ENCODE measurements at regions of chr9 and their contacts with region 1.

Region 1: DNA sequence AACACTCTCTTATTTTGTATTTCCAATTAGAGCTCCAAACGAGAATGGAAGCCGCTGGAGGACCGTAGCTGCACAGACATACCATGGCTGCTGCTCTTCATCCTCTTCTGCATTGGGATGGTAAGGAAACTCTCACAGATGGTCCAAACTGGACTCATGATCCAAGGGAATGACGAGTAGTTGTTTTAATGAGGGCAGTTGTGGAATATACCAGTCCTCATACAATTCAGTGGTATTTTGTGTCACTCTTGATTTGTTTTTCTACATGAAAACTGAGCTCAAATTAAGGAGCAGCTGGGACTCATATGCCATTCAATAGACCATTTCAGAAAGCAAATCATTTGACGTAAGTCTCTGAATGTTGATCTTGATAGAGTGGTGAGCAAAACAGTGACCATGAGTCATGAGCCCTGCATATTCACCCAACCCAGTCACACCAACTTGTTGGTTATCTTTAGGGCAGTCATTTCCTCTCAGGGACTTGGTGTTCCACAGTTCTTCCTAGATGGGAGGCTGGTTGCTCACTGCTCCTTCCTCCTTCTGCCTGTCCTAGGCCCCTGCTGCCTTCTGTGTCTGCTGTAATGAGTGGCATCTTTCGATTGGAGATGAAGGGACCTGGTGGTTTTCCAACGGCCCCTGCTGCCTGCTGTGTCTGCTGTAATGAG is 54.9 kb downstream of the SLC44A1 start:
- DNase-seq: peak; percentile 34
- H3K4me3 Mint-ChIP-seq: no peak overlapping the region
- H3K27ac Mint-ChIP-seq: peak overlapping the region; percentile 84
- H3K4me1 Mint-ChIP-seq: peaks cover 45% of the 10 kb centered on the region
- H3K27me3 Mint-ChIP-seq: no peaks in the 10 kb centered on the region
- CTCF ChIP-seq: no peak

Region 2: GRCh38 chr9:105264380-105264779 is 34.9 kb before region 1 on chr9:
- CTCF ChIA-PET with region 1: no interaction called
- intact Hi-C with region 1: loop called (anchors 5 kb)
- DNase-seq: no peak
- H3K4me3 Mint-ChIP-seq: peak overlapping the region; percentile 15
- H3K27ac Mint-ChIP-seq: peak overlapping the region; percentile 59
- H3K4me1 Mint-ChIP-seq: peaks cover 30% of the 10 kb centered on the region
- H3K27me3 Mint-ChIP-seq: no peaks in the 10 kb centered on the region
- CTCF ChIP-seq: no peak

Region 3: DNA sequence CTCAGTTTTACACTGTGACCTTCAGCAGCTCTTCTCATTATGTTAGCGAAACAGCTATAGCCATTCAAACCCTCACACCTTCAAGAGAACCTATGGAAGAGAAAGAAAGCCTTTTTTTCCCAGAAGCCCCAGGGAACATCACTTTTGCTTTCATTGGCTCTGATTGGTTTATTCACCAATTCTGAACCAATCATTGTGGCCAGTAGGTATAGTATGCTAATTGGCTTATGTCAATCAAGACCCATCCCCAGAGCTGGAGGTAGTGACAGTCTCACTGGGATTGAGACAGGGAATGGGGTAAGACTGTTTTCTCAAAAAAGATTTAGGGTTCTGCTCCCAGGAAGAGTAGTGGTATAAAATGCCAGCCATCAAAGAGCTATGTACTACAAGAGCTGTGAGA is 74.4 kb after region 1 on chr9:
- CTCF ChIA-PET with region 1: no interaction called
- intact Hi-C with region 1: no loop called
- DNase-seq: no peak
- H3K4me3 Mint-ChIP-seq: no peak overlapping the region
- H3K27ac Mint-ChIP-seq: no peak overlapping the region
- H3K4me1 Mint-ChIP-seq: no peaks in the 10 kb centered on the region
- H3K27me3 Mint-ChIP-seq: no peaks in the 10 kb centered on the region
- CTCF ChIP-seq: no peak

Measured in Calu3 (cell line).